Right cardiac atrium (tissue), 5 donors: ENCODE measurements at regions of chr6 and their contacts with region 1.

Region 1: DNA sequence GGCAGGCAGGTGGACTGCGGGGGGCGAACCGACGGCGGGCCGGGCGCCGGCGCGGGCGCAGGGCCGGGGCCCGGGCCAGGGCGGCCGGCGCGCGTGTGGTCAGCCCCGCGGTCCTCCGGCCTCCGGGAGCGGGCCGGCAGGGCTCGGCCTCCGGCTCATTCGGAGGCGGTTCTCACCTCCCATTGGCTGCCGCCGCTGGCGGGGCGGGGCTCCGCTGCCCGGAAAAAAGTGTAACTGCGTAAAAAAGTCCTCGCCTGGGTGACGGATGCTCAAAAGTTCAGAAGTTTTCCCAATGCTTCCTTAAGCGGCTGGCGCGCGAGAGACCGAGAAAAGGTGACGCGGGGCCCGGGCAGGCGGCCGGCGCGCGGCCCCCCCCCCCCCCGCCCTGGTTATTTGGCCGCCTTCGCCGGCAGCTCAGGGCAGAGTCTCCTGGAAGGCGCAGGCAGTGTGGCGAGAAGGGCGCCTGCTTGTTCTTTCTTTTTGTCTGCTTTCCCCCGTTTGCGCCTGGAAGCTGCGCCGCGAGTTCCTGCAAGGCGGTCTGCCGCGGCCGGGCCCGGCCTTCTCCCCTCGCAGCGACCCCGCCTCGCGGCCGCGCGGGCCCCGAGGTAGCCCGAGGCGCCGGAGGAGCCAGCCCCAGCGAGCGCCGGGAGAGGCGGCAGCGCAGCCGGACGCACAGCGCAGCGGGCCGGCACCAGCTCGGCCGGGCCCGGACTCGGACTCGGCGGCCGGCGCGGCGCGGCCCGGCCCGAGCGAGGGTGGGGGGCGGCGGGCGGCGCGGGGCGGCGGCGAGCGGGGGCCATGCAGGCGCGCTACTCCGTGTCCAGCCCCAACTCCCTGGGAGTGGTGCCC is at the start of gene FOXC1:
- DNase-seq: peak; percentile 93 to 96 (median 96)
- ATAC-seq: peak; percentile 85 to 91
- H3K4me3 ChIP-seq: peak within 1 kb of the TSS; percentile 97
- H3K27ac ChIP-seq: peak within 1 kb of the TSS; percentile 98
- H3K4me1 ChIP-seq: no peaks in the 10 kb centered on the region
- H3K27me3 ChIP-seq: no peaks in the 10 kb centered on the region
- total RNA-seq, gene FOXC1: 15.1 to 25.0 (median 21.9) TPM

Region 2: DNA sequence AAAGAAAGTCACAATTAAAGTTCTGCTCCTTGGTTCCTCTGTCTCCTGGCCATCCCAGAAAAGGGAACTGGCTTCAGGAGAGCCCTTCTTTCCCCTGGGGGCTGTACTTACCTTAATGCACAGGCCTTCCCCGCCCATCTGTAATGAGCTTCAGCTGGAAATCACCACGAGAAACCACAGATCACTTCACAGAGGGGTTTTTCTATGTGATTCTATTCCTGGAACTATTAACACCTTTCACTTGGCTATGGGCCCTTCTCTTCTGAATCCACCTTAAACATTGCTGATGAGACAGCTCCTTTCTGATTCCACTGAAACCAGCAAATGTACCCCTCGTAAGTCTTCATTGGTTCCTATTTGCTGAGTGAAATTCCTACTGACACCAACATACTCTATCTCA is 139.8 kb before region 1 on chr6:
- intact Hi-C with region 1: no loop called
- DNase-seq: no peak
- ATAC-seq: no peak
- H3K4me3 ChIP-seq: no peak overlapping the region
- H3K27ac ChIP-seq: no peak overlapping the region
- H3K4me1 ChIP-seq: no peaks in the 10 kb centered on the region
- H3K27me3 ChIP-seq: peaks cover under 1% of the 10 kb centered on the region

Region 3: GRCh38 chr6:2103644-2104523 is 494.0 kb after region 1 on chr6:
- intact Hi-C with region 1: loop called in 2 of 4 experiments (anchors 5 to 10 kb)
- DNase-seq: peak in 2 of 3 donors; percentile 25 to 55
- ATAC-seq: peak; percentile 87 to 89
- H3K4me3 ChIP-seq: peak overlapping the region; percentile 31
- H3K27ac ChIP-seq: peak overlapping the region; percentile 13
- H3K4me1 ChIP-seq: no peaks in the 10 kb centered on the region
- H3K27me3 ChIP-seq: no peaks in the 10 kb centered on the region

Region 4: DNA sequence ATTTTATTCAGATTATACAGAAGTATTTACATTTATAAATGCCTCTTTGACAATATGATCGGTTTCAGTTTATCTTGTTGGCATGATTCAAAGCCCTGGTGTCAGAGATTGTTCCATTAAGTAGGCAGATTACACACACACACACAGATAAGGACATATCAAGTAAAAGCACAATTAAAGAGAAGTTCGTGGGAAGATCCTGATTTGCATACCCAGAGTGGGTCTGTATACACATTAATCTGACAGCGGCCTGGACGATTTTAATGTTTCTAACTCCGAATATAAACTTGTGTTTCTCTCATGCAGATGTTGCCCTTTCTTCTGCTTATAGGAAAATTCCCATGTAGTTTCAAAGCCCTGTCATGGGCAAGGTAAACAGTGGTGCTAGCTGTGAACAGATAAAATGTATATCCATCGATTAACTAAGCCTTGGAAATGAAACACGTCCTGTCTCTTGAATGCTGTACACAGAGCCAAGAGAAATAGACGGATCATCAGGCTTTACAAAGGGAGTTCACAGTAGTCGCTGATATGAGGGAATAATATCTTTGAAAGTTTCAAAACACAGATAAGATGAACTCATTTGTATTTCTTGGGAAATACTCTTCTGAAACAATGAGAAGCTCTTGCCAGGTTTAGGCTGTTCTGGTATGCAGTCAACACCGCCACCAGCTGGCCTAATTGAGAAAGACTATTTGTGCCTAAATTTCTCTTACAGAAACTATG is 743.7 kb after region 1 on chr6:
- intact Hi-C with region 1: loop called in 1 of 4 experiments (anchors 10 kb)
- DNase-seq: peak; percentile 56 to 74 (median 68)
- ATAC-seq: peak; percentile 91 to 92
- H3K4me3 ChIP-seq: no peak overlapping the region
- H3K27ac ChIP-seq: no peak overlapping the region
- H3K4me1 ChIP-seq: no peaks in the 10 kb centered on the region
- H3K27me3 ChIP-seq: no peaks in the 10 kb centered on the region

Region 5: GRCh38 chr6:2634139-2634964 is 1024.5 kb after region 1 on chr6:
- intact Hi-C with region 1: loop called in 1 of 4 experiments (anchors 10 kb)
- DNase-seq: peak; percentile 91 to 95 (median 95)
- ATAC-seq: peak; percentile 95
- H3K4me3 ChIP-seq: peak overlapping the region; percentile 69
- H3K27ac ChIP-seq: peak overlapping the region; percentile 54
- H3K4me1 ChIP-seq: peaks cover 4% of the 10 kb centered on the region
- H3K27me3 ChIP-seq: no peaks in the 10 kb centered on the region

Region 6: DNA sequence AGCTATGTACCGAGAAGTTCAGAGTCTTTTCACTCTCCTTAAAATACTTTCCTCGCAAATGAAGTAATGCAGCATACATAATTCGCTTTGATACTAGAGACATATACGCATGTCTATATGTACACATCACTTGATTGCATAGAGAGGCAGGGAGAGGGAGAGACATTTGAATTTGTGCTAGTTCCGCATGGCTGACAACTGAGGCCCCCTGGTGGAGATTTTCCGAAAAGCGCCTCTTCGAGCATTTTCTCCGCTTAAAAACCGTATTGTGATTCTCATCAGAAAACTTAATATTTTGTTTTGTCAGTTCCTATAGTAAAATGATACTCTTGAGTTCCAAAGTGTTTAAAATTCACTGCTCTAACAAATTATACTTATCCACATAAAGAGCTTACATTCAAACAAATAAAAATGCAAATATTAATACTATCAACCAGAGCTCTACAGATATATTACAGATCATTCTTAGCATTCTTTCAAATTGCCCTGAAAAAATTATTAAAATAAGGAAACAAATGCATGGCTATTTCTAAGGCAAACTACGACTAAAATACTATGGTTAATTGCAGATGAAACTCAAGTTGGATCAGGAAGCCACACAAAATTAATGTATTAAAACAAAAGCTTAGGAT is 1140.2 kb after region 1 on chr6:
- intact Hi-C with region 1: loop called in 1 of 4 experiments (anchors 10 kb)
- DNase-seq: peak in 2 of 3 donors; percentile 70 to 72
- ATAC-seq: peak in 1 of 2 donors; percentile 52
- H3K4me3 ChIP-seq: peak overlapping the region; percentile 0
- H3K27ac ChIP-seq: no peak overlapping the region
- H3K4me1 ChIP-seq: no peaks in the 10 kb centered on the region
- H3K27me3 ChIP-seq: no peaks in the 10 kb centered on the region